Activated CD4-positive, alpha-beta T cell treated with anti-CD3 and anti-CD28 coated beads, Interleukin-2, amount 10 ng/mL, durations not matched to agents 7 days and 5 days (primary cell): ENCODE measurements at regions of chr1 and their contacts with region 1.

Region 1: DNA sequence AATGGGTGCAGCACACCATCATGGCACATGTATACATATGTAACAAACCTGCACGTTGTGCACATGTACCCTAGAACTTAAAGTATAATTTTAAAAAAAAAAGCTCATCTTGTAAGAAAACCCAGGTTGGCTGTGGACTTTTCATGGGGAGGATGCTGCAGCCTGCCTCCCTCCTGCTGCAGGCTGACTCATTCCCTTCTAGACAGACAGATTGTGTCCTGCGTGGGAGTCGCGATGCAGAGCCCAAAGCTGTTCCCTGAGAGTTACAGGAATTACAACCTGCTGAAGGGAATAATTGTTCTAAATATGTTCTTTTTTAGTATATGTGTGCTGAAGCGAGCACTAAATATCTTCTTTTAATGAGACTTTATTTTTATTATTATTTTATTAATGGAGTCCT is 93.2 kb downstream of the TBX19 start:
- DNase-seq: no peak
- H3K4me3 Mint-ChIP-seq: no peak overlapping the region
- H3K27ac Mint-ChIP-seq: no peak overlapping the region
- H3K4me1 Mint-ChIP-seq: no peaks in the 10 kb centered on the region
- H3K27me3 Mint-ChIP-seq: no peaks in the 10 kb centered on the region

Region 2: DNA sequence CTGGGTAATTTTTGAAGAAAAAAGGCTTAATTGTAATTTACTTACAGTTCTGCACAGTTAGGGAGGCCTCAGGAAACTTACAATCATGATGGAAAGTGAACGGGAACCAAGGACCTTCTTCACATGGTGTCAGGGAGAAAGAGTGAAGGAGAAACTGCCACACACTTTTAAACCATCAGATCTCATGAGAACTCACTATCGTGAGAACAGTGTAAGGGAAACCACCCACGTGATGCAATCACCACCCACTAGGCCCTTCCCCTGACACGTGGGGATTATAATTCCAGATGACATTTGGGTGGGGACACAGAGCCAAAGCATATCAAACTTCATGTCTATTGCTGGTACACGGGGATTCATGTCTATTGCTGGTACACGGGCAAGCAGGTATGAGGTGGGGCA is 153.4 kb before region 1 on chr1:
- CTCF ChIA-PET with region 1: no interaction called
- POLR2A ChIA-PET with region 1: no interaction called
- DNase-seq: no peak
- H3K4me3 Mint-ChIP-seq: no peak overlapping the region
- H3K27ac Mint-ChIP-seq: no peak overlapping the region
- H3K4me1 Mint-ChIP-seq: peaks cover 14% of the 10 kb centered on the region
- H3K27me3 Mint-ChIP-seq: peaks cover 5% of the 10 kb centered on the region

Region 3: DNA sequence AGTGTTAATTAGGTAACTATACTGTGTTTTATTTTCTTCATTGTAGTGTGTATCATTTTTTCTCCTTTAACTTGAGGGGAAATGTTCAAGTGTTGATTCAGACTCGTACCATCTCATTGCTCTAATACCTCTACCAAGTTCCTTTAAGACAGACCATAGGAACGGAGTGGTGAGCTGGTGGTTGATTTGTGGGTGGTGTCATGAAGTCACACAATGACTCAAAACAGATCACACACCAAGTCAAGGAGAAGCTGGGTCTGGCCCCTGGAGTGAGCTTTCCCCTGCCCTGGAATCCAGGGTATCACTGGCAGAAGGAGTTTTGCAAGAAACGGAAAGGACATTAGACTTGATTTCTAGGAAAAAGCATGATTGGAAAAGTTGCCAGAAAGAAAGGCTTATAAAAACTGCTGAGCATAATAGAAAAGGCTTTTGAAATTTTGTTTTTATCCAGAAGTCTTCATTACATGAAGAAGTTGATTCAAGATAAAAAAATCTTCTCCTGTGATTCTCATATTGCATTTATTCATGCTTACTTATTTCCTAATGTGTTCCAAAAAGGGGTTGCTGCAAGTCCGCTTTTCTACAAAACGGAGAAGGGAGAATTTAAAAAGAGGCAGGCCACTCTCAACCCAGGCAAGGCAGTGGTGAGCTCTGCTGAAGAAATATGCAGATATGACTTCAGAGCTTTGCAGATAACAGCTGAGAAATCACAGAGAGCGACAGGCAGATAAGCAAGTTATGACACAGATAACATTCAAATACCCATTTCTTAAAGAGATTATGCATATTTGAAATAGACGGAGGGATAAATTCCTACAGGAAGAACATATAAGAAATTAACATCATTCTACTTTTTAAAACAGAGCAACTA is 13.5 kb before region 1 on chr1:
- CTCF ChIA-PET with region 1: interaction called, 12 read pairs
- POLR2A ChIA-PET with region 1: no interaction called
- DNase-seq: peak; percentile 32
- H3K4me3 Mint-ChIP-seq: no peak overlapping the region
- H3K27ac Mint-ChIP-seq: no peak overlapping the region
- H3K4me1 Mint-ChIP-seq: peaks cover 42% of the 10 kb centered on the region
- H3K27me3 Mint-ChIP-seq: peaks cover 9% of the 10 kb centered on the region